ENCODE measurements at regions of chr3 and their contacts with region 1.

Region 1: GRCh38 chr3:171269542-171269941 is 190.7 kb downstream of the TNIK start:
- DNase-seq: peak in 1 of 5 donors; percentile 37
- H3K4me3 ChIP-seq: peak overlapping the region in 1 of 2 donors; percentile 2
- H3K4me3 Mint-ChIP-seq: peak overlapping the region; percentile 65 to 84 (median 76)
- H3K27ac ChIP-seq: peak overlapping the region; percentile 8
- H3K27ac Mint-ChIP-seq: peak overlapping the region; percentile 36 to 87 (median 74)
- H3K4me1 ChIP-seq: peaks cover 90% of the 10 kb centered on the region
- H3K4me1 Mint-ChIP-seq: peaks cover 66 to 94% (median 81%) of the 10 kb centered on the region in 4 donors
- H3K27me3 ChIP-seq: no peaks in the 10 kb centered on the region
- H3K27me3 Mint-ChIP-seq: no peaks in the 10 kb centered on the region

Region 2: GRCh38 chr3:171248425-171249111 is 21.0 kb before region 1 on chr3:
- CTCF ChIA-PET with region 1: interaction called, 4 read pairs
- POLR2A ChIA-PET with region 1: interaction called, 5 read pairs
- intact Hi-C with region 1: loop called (anchors 2 kb)
- DNase-seq: peak in 1 of 5 donors; percentile 25
- H3K4me3 ChIP-seq: peak overlapping the region in 1 of 2 donors; percentile 37
- H3K4me3 Mint-ChIP-seq: no peak overlapping the region
- H3K27ac ChIP-seq: peak overlapping the region; percentile 25
- H3K27ac Mint-ChIP-seq: peak overlapping the region in 1 of 7 donors; percentile 65
- H3K4me1 ChIP-seq: peaks cover 81% of the 10 kb centered on the region
- H3K4me1 Mint-ChIP-seq: peaks cover 30 to 45% (median 38%) of the 10 kb centered on the region in 4 donors
- H3K27me3 ChIP-seq: no peaks in the 10 kb centered on the region
- H3K27me3 Mint-ChIP-seq: no peaks in the 10 kb centered on the region

Region 3: GRCh38 chr3:171257251-171258203 is 12.0 kb before region 1 on chr3:
- CTCF ChIA-PET with region 1: interaction called, 9 read pairs
- POLR2A ChIA-PET with region 1: interaction called, 17 read pairs
- intact Hi-C with region 1: loop called (anchors 2 kb)
- DNase-seq: peak in 2 of 5 donors; percentile 31 to 33
- H3K4me3 ChIP-seq: peak overlapping the region in 1 of 2 donors; percentile 9
- H3K4me3 Mint-ChIP-seq: peak overlapping the region in 7 of 8 donors; percentile 32 to 87 (median 52)
- H3K27ac ChIP-seq: peak overlapping the region; percentile 68
- H3K27ac Mint-ChIP-seq: peak overlapping the region in 6 of 7 donors; percentile 90 to 97 (median 96)
- H3K4me1 ChIP-seq: peaks cover 99% of the 10 kb centered on the region
- H3K4me1 Mint-ChIP-seq: peaks cover 80 to 97% (median 88%) of the 10 kb centered on the region in 4 donors
- H3K27me3 ChIP-seq: no peaks in the 10 kb centered on the region
- H3K27me3 Mint-ChIP-seq: no peaks in the 10 kb centered on the region

Region 4: DNA sequence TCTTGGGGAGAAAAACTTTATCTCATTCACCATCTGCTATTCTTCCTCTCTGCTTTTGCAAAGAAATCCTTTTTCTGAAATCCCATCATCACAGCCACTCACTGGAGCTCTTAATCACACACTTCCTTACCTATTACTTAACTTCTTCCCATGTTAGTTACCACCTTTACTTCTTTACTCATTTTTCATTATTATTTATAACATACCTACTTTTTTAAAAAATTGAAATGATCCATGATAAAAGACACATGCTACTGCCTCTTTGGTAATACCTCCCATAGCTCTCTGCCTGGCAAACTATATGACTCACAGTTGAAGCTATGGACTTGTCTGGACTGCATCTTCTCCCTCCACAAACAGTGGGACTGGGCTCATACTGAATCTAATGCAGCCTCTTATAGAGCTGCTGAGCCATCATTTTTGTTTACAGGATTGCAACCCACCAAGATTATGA is 40.4 kb after region 1 on chr3:
- CTCF ChIA-PET with region 1: interaction called, 3 read pairs
- POLR2A ChIA-PET with region 1: interaction called, 3 read pairs
- intact Hi-C with region 1: loop called (anchors 5 kb)
- DNase-seq: no peak
- H3K4me3 ChIP-seq: no peak overlapping the region
- H3K4me3 Mint-ChIP-seq: peak overlapping the region in 1 of 8 donors; percentile 13
- H3K27ac ChIP-seq: no peak overlapping the region
- H3K27ac Mint-ChIP-seq: peak overlapping the region in 6 of 7 donors; percentile 5 to 74 (median 39)
- H3K4me1 ChIP-seq: peaks cover 28% of the 10 kb centered on the region
- H3K4me1 Mint-ChIP-seq: peaks cover 48 to 86% (median 70%) of the 10 kb centered on the region in 4 donors
- H3K27me3 ChIP-seq: no peaks in the 10 kb centered on the region
- H3K27me3 Mint-ChIP-seq: no peaks in the 10 kb centered on the region

Measured in CD4-positive, alpha-beta memory T cell (primary cell).